GM12878 (cell line): ENCODE measurements at regions of chr10 and their contacts with region 1.

Region 1: DNA sequence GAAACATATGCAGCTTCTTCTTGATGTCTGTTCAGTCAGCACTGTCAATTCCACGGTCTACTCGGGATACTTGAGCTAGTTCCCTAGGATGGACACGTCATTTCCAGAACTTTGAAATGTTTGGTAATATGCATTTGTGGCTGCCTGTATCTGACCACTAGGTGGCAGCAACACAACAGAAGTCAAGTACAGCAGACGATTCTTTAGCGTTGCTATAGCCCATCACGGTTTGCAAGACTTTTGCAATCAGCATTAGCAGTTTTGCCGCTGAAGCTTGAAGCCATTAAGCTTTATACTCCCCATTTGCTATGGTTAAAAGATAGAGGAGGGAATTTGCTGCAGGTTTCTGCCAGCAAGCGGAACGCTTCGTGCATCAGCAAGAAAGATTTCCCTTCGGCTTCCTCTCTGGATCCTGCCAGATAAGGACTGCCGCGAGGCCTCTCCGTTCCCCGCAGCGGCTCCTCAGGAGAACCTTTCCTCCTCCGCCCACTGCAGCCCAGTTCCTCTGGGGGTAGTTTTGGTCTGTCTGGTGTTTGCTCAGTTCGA is 63.5 kb downstream of the ABCC2 start:
- DNase-seq: peak; percentile 59
- ATAC-seq: peak; percentile 95
- H3K4me3 ChIP-seq: 0 out of 2 replicates have a peak overlapping the region, but pooled peaks have one; percentile 34
- H3K27ac ChIP-seq: no peak overlapping the region
- H3K4me1 ChIP-seq: 0 out of 2 replicates have a peak, but pooled peaks cover 2% of the 10 kb centered on the region
- H3K27me3 ChIP-seq: no peaks in the 10 kb centered on the region
- CTCF ChIP-seq: peak; percentile 83 to 93 (median 89)
- EP300 ChIP-seq: no peak
- POLR2A ChIP-seq: no peak
- RAD21 ChIP-seq: peak; percentile 93

Region 2: DNA sequence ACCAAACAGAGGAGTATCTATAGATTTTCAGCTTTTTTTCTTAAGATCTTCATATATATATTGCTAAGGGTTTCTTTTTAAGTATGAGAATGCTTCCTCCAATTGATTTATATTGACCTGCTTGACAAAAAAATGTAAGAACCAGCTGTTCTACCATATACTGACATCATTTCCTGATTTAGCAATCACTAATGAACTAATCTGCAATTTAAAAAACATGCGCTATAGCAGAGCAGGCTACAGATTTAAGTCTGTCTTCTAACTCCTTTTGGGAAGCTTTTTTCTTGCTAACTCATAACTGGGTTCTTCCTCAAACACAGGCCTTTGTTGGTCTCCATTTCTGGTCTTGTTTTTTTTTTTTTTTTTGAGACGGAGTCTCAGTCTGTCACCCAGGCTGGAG is 30.3 kb before region 1 on chr10:
- CTCF ChIA-PET with region 1: no interaction called
- POLR2A ChIA-PET with region 1: no interaction called
- RAD21 ChIA-PET with region 1: no interaction called
- SMC1A ChIA-PET with region 1: no interaction called
- in situ Hi-C with region 1: no loop called
- intact Hi-C with region 1: no loop called
- DNase-seq: no peak
- ATAC-seq: no peak
- H3K4me3 ChIP-seq: no peak overlapping the region
- H3K27ac ChIP-seq: no peak overlapping the region
- H3K4me1 ChIP-seq: no peaks in the 10 kb centered on the region
- H3K27me3 ChIP-seq: no peaks in the 10 kb centered on the region
- CTCF ChIP-seq: no peak
- EP300 ChIP-seq: no peak
- POLR2A ChIP-seq: no peak
- RAD21 ChIP-seq: no peak

Region 3: DNA sequence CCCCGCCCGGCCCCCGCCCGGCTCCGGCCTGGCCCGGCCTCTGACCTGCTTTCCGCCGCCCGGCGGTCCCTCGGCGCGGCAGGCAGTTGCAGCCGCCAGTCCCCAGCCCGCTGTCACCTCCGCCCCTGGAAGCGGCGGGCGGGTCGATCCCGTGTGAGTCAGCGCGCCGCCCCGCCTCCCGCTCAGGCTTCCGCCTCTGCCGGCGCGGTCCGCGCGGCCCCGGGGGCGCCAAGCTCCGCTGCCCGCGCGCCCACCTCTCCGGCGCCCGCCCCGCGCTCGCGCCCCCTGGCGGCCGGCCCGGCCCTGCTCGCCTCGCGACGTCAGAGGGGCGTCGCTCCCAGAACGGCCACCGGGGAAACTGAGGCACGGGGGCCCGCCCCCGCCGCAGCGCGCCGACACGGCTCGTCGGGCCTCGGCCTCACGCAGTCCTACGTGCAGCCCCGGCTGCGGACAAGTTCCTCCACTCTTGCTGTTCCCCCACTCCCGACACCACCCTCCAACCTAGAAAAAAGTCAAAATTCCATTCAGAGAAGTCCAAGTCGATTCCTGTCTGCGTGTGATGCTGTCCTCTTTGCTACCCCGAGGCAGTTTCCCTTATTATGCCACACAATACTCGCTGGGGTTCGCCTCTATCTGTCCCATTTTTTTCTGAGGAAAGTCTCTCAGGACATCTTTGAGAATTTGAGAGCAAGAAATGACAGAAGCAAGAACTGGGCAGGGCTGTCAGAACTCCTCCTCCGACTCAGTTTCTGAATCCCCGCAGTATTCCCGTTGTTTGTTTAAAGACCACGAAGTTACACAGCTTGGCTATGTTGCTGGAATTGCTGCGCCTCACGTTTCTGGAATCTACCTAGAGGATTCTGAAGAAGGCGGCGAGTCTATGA is 164.1 kb after region 1 on chr10 and contains the start of gene DNMBP:
- CTCF ChIA-PET with region 1: interaction called, 16 read pairs
- POLR2A ChIA-PET with region 1: no interaction called
- RAD21 ChIA-PET with region 1: interaction called, 10 read pairs
- SMC1A ChIA-PET with region 1: interaction called, 11 read pairs
- in situ Hi-C with region 1: no loop called
- intact Hi-C with region 1: no loop called
- DNase-seq: no peak
- ATAC-seq: peak; percentile 69
- H3K4me3 ChIP-seq: peak within 1 kb of the TSS; percentile 97
- H3K27ac ChIP-seq: peak within 1 kb of the TSS; percentile 78
- H3K4me1 ChIP-seq: peaks cover 22% of the 10 kb centered on the region
- H3K27me3 ChIP-seq: no peaks in the 10 kb centered on the region
- CTCF ChIP-seq: peak; percentile 40 to 58 (median 53); a peak in 5 of 6 replicates
- EP300 ChIP-seq: no peak
- POLR2A ChIP-seq: peak; percentile 89
- RAD21 ChIP-seq: peak; percentile 65
- polyA plus RNA-seq, gene DNMBP: 7.1 to 9.8 TPM

Region 4: DNA sequence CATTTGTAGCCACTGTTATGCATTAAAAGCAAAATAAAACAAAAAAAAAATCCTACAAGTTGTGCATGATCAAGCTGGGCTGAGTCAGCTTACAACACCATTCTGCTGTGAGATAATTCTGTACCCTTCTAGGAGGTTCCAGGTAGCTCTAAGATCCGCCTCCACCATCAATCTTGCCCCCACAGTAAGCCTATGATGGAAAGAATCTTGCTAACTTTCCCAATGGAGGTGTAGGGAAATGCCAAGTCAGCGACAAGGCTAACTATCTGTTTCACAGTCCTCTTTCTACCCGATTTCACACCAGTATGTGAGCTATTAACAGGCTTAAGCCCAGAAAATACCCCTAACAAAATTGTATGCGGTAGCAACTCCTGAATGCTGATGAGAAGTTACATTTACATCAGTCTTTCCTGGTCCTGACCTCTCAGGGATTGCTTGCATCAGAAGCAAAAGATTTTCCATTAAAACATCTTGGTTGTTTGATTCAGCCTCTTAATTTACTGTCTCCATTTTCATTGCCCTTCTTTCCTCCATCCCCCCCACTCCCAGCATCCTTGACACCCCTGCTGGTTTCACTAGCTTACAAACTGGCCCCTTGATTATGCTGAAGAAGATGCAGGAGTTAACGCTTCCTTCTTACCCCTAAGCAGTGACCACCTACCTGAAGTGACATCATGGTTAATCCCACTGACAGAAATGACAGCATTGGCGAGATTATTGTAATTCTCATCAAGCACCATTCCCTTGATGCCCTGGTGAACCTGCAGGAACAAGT is 208.0 kb after region 1 on chr10:
- CTCF ChIA-PET with region 1: interaction called, 340 read pairs
- POLR2A ChIA-PET with region 1: no interaction called
- RAD21 ChIA-PET with region 1: interaction called, 19 read pairs
- SMC1A ChIA-PET with region 1: interaction called, 173 read pairs
- in situ Hi-C with region 1: loop called (anchors 5 kb)
- intact Hi-C with region 1: no loop called
- DNase-seq: no peak
- ATAC-seq: no peak
- H3K4me3 ChIP-seq: no peak overlapping the region
- H3K27ac ChIP-seq: no peak overlapping the region
- H3K4me1 ChIP-seq: no peaks in the 10 kb centered on the region; the same call in 1 of the 2 replicates
- H3K27me3 ChIP-seq: no peaks in the 10 kb centered on the region
- CTCF ChIP-seq: no peak
- EP300 ChIP-seq: no peak
- POLR2A ChIP-seq: no peak
- RAD21 ChIP-seq: no peak

Region 5: GRCh38 chr10:100185364-100186252 is 339.7 kb after region 1 on chr10 and contains the start of gene ERLIN1:
- CTCF ChIA-PET with region 1: interaction called, 4 read pairs
- POLR2A ChIA-PET with region 1: no interaction called
- RAD21 ChIA-PET with region 1: interaction called, 5 read pairs
- SMC1A ChIA-PET with region 1: no interaction called
- in situ Hi-C with region 1: no loop called
- intact Hi-C with region 1: loop called (anchors 10 kb)
- DNase-seq: peak; percentile 61
- ATAC-seq: peak; percentile 95
- H3K4me3 ChIP-seq: peak within 1 kb of the TSS; percentile 91
- H3K27ac ChIP-seq: peak within 1 kb of the TSS; percentile 83
- H3K4me1 ChIP-seq: no peaks in the 10 kb centered on the region; the same call in 1 of the 2 replicates
- H3K27me3 ChIP-seq: no peaks in the 10 kb centered on the region
- CTCF ChIP-seq: no peak
- EP300 ChIP-seq: peak in 1 of 2 experiments; percentile 26; a peak in 1 of 4 replicates
- POLR2A ChIP-seq: peak; percentile 85
- RAD21 ChIP-seq: no peak
- polyA plus RNA-seq, gene ERLIN1: 4.9 to 5.8 TPM

Region 6: DNA sequence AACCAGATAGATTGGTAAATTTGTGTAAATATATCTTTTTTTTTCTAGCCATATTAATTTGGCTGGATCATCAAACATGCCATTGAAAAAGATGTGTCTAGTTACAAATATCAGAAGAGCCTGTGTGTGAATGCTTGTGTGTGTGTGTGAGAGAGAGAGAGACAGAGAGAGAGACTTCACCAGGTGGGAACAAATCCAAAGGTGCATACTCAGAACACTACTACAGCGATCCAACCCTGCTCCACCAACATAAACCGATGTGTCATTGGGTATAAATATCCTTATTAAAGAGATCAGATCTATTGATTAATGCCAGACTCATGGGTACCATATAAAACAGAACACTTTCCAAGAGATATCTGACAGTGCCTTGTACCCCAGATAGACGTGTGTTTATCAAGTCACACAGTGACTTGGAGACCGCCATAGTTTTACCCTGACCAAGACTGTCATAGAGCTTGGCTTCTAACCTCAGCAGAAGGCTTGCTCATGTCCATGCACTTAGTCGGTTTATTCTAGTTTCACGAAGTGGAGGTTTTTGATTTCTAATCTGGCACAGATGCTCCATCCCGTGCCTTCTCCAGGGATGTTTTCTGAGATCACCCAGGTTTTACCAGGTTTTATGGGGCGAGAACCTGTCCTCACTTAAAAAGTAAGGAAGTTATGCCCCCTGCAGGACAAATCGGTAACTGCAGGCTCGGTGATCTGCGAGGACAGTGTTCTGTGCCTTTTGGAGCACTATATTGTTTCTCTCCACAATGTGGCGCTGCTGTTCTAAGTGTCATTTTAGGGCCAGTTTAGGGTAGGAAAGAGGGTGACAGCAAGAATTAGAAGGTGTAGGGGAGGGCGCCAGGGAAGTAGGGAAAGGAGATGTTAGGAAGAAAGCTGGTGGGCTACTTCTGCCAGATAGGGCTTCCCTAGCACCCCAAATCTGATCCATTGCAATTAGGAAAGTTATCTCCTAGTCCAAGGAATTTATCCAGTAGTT is 587.6 kb after region 1 on chr10:
- CTCF ChIA-PET with region 1: interaction called, 4 read pairs
- POLR2A ChIA-PET with region 1: no interaction called
- RAD21 ChIA-PET with region 1: interaction called, 3 read pairs
- SMC1A ChIA-PET with region 1: interaction called, 4 read pairs
- in situ Hi-C with region 1: no loop called
- intact Hi-C with region 1: loop called (anchors 5 kb)
- DNase-seq: peak; percentile 81
- ATAC-seq: peak; percentile 96
- H3K4me3 ChIP-seq: no peak overlapping the region
- H3K27ac ChIP-seq: no peak overlapping the region
- H3K4me1 ChIP-seq: no peaks in the 10 kb centered on the region
- H3K27me3 ChIP-seq: no peaks in the 10 kb centered on the region
- CTCF ChIP-seq: peak; percentile 96 to 100 (median 100); a peak in 5 of 6 replicates
- EP300 ChIP-seq: no peak
- POLR2A ChIP-seq: no peak
- RAD21 ChIP-seq: peak; percentile 98

Region 7: GRCh38 chr10:100579261-100580090 is 733.6 kb after region 1 on chr10:
- CTCF ChIA-PET with region 1: no interaction called
- POLR2A ChIA-PET with region 1: no interaction called
- RAD21 ChIA-PET with region 1: no interaction called
- SMC1A ChIA-PET with region 1: no interaction called
- in situ Hi-C with region 1: no loop called
- intact Hi-C with region 1: no loop called
- DNase-seq: no peak
- ATAC-seq: no peak
- H3K4me3 ChIP-seq: no peak overlapping the region
- H3K27ac ChIP-seq: no peak overlapping the region
- H3K4me1 ChIP-seq: no peaks in the 10 kb centered on the region
- H3K27me3 ChIP-seq: peaks cover 1 to 2% of the 10 kb centered on the region in 2 experiments; a peak in 2 of 4 replicates
- CTCF ChIP-seq: no peak
- EP300 ChIP-seq: no peak
- POLR2A ChIP-seq: no peak
- RAD21 ChIP-seq: no peak